Activated CD8-positive, alpha-beta T cell treated with anti-CD3 and anti-CD28 coated beads for 36 hours (primary cell): ENCODE measurements at regions of chr12 and their contacts with region 1.

Region 1: GRCh38 chr12:107929436-107929835 is 154.9 kb downstream of the ASCL4 start:
- DNase-seq: no peak
- ATAC-seq: peak; percentile 45
- H3K4me3 Mint-ChIP-seq: no peak overlapping the region
- H3K27ac Mint-ChIP-seq: no peak overlapping the region
- H3K4me1 Mint-ChIP-seq: no peaks in the 10 kb centered on the region
- H3K27me3 Mint-ChIP-seq: peaks cover 17% of the 10 kb centered on the region
- CTCF ChIP-seq: no peak

Region 2: GRCh38 chr12:107912421-107913004 is 16.9 kb before region 1 on chr12:
- CTCF ChIA-PET with region 1: interaction called, 10 read pairs
- POLR2A ChIA-PET with region 1: no interaction called
- intact Hi-C with region 1: no loop called
- DNase-seq: peak; percentile 74
- ATAC-seq: peak; percentile 86
- H3K4me3 Mint-ChIP-seq: peak overlapping the region; percentile 68
- H3K27ac Mint-ChIP-seq: no peak overlapping the region
- H3K4me1 Mint-ChIP-seq: peaks cover 3% of the 10 kb centered on the region
- H3K27me3 Mint-ChIP-seq: peaks cover 40% of the 10 kb centered on the region
- CTCF ChIP-seq: peak; percentile 86